ENCODE measurements at regions of chr6 and their contacts with region 1.

Region 1: GRCh38 chr6:89834884-89835792 is 5.5 kb downstream of the CASP8AP2 start:
- DNase-seq: peak; percentile 71
- H3K4me3 Mint-ChIP-seq: peak overlapping the region; percentile 9
- H3K27ac Mint-ChIP-seq: peak overlapping the region; percentile 76
- H3K4me1 Mint-ChIP-seq: peaks cover 61% of the 10 kb centered on the region
- H3K27me3 Mint-ChIP-seq: no peaks in the 10 kb centered on the region

Region 2: DNA sequence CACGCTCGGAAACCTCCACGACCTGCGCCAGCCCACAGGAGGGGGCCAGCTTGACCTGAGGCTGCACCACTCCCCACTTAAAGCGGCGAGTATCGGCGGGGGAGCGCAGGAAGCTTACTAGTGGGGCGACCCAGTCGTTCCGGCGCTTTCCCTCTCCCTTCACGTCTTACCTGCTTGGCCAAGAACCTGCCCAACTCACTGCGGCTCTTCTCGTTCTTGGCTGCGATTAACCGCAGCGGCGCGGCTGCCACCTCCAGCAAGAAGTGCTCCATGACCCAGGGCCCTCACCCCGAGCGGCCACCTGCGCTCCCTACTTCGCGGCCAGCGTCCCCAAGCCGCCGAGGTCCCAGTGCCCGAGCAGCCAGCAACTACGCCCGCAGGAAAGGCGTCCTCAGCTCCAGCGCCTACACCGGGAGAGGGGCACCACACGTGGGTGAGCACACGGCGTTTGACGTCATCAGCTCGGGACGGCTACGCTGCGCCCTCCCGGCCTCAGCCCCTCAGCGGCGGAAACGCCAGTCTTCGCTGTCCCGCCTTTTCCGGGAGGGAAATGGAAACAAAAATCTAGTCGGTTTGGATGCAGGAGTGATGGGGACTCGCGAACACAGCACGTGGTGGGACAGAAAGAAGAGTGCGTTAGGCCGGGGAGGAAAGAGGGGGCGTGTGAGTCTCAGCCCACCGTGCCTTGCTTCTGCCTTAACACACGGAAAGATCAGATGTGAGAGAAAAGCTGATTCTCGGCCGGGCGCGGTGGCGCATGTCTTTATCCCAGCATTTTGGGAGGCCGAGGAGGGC is 15.6 kb before region 1 on chr6 and contains the start of gene MDN1:
- CTCF ChIA-PET with region 1: interaction called, 25 read pairs
- POLR2A ChIA-PET with region 1: interaction called, 55 read pairs
- intact Hi-C with region 1: loop called (anchors 2 kb)
- DNase-seq: peak; percentile 94
- H3K4me3 Mint-ChIP-seq: peak within 1 kb of the TSS; percentile 98
- H3K27ac Mint-ChIP-seq: peak within 1 kb of the TSS; percentile 97
- H3K4me1 Mint-ChIP-seq: peaks cover 28% of the 10 kb centered on the region
- H3K27me3 Mint-ChIP-seq: no peaks in the 10 kb centered on the region
- total RNA-seq, gene MDN1: 39.1 to 40.2 TPM

Region 3: GRCh38 chr6:89887452-89888137 is 52.5 kb after region 1 on chr6:
- CTCF ChIA-PET with region 1: no interaction called
- POLR2A ChIA-PET with region 1: no interaction called
- intact Hi-C with region 1: loop called (anchors 1 kb)
- DNase-seq: peak; percentile 17
- H3K4me3 Mint-ChIP-seq: no peak overlapping the region
- H3K27ac Mint-ChIP-seq: no peak overlapping the region
- H3K4me1 Mint-ChIP-seq: peaks cover 9% of the 10 kb centered on the region
- H3K27me3 Mint-ChIP-seq: peaks cover 8% of the 10 kb centered on the region